ENCODE measurements at regions of chr10 and their contacts with region 1.

Region 1: DNA sequence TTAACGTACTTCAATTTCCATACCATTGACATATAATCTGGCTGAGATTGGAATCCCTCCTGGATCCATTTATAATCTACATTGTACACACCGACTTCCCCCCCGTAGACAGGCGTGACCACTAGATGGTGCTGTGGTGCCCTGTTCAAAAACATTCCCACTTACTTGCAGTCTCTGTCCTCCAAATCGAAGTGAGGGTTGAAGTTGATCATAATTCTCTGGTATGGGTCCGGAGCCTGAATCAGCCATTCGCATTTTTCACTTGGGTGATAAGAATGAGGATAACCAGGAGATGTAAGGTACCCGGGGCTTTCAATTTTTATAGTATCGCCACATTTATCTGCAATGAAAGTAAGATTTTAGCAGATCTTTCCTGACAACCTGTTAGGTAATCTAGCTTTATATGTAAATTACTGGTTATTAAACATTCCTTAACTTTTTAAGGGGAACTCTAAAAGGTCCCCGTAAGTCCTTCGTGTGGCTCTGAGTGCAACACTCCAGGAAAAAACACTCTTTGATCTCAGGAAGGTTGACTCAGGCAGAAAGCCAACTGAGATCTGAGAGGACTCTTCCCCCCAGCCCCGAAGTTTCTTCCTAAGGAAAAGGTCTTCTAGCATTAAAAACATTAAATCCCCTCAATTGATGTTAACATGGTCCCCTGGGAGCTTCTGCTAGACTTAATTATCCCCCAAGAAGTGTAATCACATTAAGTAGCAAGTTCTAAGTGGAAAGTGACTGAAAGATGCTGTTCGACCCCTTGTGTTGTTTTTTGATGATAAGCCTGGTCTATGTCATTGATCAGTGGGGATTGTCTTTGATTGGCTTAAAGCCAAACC is 3.7 kb downstream of the NRP1 start:
- DNase-seq: peak; percentile 90
- ATAC-seq: peak; percentile 27
- H3K4me3 ChIP-seq: peak overlapping the region; percentile 85; the same call in 1 of the 2 replicates
- H3K27ac ChIP-seq: peak overlapping the region; percentile 35; the same call in 1 of the 2 replicates
- H3K4me1 ChIP-seq: peaks cover 8% of the 10 kb centered on the region; the same call in 1 of the 2 replicates
- H3K27me3 ChIP-seq: no peaks in the 10 kb centered on the region
- CTCF ChIP-seq: peak; percentile 92
- POLR2A ChIP-seq: no peak
- RAD21 ChIP-seq: peak; percentile 95

Region 2: GRCh38 chr10:33193057-33193700 is 137.6 kb before region 1 on chr10:
- CTCF ChIA-PET with region 1: interaction called, 11 read pairs
- POLR2A ChIA-PET with region 1: no interaction called
- dilution Hi-C with region 1: no loop called
- in situ Hi-C with region 1: no loop called
- intact Hi-C with region 1: loop called (anchors 1 kb)
- DNase-seq: peak; percentile 87
- ATAC-seq: peak; percentile 81
- H3K4me3 ChIP-seq: no peak overlapping the region
- H3K27ac ChIP-seq: no peak overlapping the region
- H3K4me1 ChIP-seq: peaks cover 18% of the 10 kb centered on the region
- H3K27me3 ChIP-seq: no peaks in the 10 kb centered on the region
- CTCF ChIP-seq: peak; percentile 77
- POLR2A ChIP-seq: no peak
- RAD21 ChIP-seq: peak; percentile 84

Region 3: GRCh38 chr10:33509231-33509831 is 178.6 kb after region 1 on chr10:
- CTCF ChIA-PET with region 1: no interaction called
- POLR2A ChIA-PET with region 1: no interaction called
- dilution Hi-C with region 1: no loop called
- in situ Hi-C with region 1: no loop called
- intact Hi-C with region 1: loop called (anchors 5 kb)
- DNase-seq: peak; percentile 84
- ATAC-seq: peak; percentile 77
- H3K4me3 ChIP-seq: no peak overlapping the region
- H3K27ac ChIP-seq: no peak overlapping the region
- H3K4me1 ChIP-seq: peaks cover 2% of the 10 kb centered on the region; the same call in 1 of the 2 replicates
- H3K27me3 ChIP-seq: peaks cover 2% of the 10 kb centered on the region; the same call in 1 of the 2 replicates
- CTCF ChIP-seq: no peak
- POLR2A ChIP-seq: no peak
- RAD21 ChIP-seq: no peak

Region 4: GRCh38 chr10:33706191-33706590 is 375.4 kb after region 1 on chr10:
- CTCF ChIA-PET with region 1: no interaction called
- POLR2A ChIA-PET with region 1: no interaction called
- dilution Hi-C with region 1: no loop called
- in situ Hi-C with region 1: no loop called
- intact Hi-C with region 1: loop called (anchors 10 kb)
- DNase-seq: peak; percentile 86
- ATAC-seq: no peak
- H3K4me3 ChIP-seq: no peak overlapping the region
- H3K27ac ChIP-seq: no peak overlapping the region
- H3K4me1 ChIP-seq: peaks cover 3% of the 10 kb centered on the region; the same call in 1 of the 2 replicates
- H3K27me3 ChIP-seq: peaks cover 5% of the 10 kb centered on the region; the same call in 1 of the 2 replicates
- CTCF ChIP-seq: no peak
- POLR2A ChIP-seq: no peak
- RAD21 ChIP-seq: no peak

Region 5: GRCh38 chr10:33901166-33901565 is 570.4 kb after region 1 on chr10:
- CTCF ChIA-PET with region 1: no interaction called
- POLR2A ChIA-PET with region 1: no interaction called
- dilution Hi-C with region 1: no loop called
- in situ Hi-C with region 1: loop called (anchors 25 kb)
- intact Hi-C with region 1: loop called (anchors 2 kb)
- DNase-seq: peak; percentile 92
- ATAC-seq: peak; percentile 80
- H3K4me3 ChIP-seq: no peak overlapping the region
- H3K27ac ChIP-seq: peak overlapping the region; percentile 48; the same call in 1 of the 2 replicates
- H3K4me1 ChIP-seq: peaks cover 7% of the 10 kb centered on the region
- H3K27me3 ChIP-seq: no peaks in the 10 kb centered on the region; the same call in 1 of the 2 replicates
- CTCF ChIP-seq: no peak
- POLR2A ChIP-seq: no peak
- RAD21 ChIP-seq: no peak

Region 6: DNA sequence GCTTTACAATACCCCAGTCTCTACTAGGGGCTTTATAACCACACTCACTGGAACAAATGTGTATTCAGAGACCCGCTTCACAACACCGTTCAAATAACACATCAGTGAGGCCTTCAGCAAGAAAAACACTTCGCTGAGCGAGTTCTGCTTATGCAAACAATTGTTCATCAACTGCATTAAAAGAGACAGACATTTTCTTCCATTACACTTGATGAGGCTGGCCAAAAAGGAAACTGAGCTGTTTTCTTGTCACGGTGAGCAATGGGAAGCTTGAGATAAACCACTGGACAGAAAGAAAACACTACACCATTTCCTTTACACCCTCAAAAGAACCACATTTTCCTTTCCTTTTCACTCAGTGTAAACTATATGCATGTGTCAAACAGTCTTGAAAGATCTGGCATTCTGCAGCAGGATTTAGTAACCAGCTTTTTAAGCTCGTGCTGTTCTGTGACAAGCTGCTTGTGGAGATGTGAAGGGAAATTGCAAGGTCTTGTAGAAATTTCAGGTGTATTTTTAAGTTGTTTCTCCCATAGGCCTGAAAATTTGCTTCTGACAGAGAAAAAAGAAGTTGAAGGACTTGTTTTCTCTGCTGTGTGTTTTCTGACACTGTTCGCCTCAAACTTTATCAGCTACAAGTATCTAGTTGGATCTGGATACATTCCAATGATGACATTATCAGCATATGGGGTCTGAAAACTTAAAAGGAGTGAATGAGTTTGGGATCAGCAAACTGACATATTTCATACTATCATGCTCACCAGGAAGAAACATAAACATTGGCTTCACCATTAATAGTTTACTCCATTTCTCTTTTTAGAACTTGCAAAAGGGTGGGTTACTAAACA is 791.2 kb after region 1 on chr10:
- CTCF ChIA-PET with region 1: interaction called, 3 read pairs
- POLR2A ChIA-PET with region 1: no interaction called
- dilution Hi-C with region 1: no loop called
- in situ Hi-C with region 1: loop called (anchors 25 kb)
- intact Hi-C with region 1: loop called (anchors 5 kb)
- DNase-seq: peak; percentile 71
- ATAC-seq: peak; percentile 81
- H3K4me3 ChIP-seq: no peak overlapping the region
- H3K27ac ChIP-seq: no peak overlapping the region
- H3K4me1 ChIP-seq: peaks cover 3% of the 10 kb centered on the region
- H3K27me3 ChIP-seq: no peaks in the 10 kb centered on the region
- CTCF ChIP-seq: no peak
- POLR2A ChIP-seq: no peak
- RAD21 ChIP-seq: no peak

Region 7: GRCh38 chr10:34407324-34407805 is 1076.6 kb after region 1 on chr10:
- CTCF ChIA-PET with region 1: no interaction called
- POLR2A ChIA-PET with region 1: no interaction called
- dilution Hi-C with region 1: no loop called
- in situ Hi-C with region 1: no loop called
- intact Hi-C with region 1: loop called (anchors 1 kb)
- DNase-seq: peak; percentile 64
- ATAC-seq: no peak
- H3K4me3 ChIP-seq: no peak overlapping the region
- H3K27ac ChIP-seq: no peak overlapping the region
- H3K4me1 ChIP-seq: peaks cover 9% of the 10 kb centered on the region
- H3K27me3 ChIP-seq: no peaks in the 10 kb centered on the region
- CTCF ChIP-seq: no peak
- POLR2A ChIP-seq: no peak
- RAD21 ChIP-seq: no peak